HepG2 (cell line): ENCODE measurements at regions of chr7 and their contacts with region 1.

Region 1: DNA sequence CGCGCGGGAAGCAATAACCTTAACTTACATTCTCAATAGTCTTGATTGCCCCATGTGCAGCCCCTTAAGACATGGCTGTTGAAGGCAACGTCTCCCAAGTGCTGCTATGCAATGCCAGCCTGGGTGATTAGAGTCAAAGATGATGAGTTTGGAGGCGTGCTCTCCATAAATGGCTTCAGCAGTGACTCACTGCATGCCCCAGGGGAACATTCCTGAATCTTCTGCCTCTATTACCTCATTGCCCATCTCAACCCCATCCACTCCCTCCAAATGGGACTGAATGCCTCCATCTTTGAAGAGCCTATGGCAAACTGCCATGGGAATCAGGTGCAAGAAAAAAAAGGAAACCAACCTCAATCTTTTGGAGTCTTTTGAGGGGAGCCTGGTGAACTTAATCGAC is 282.8 kb downstream of the SNX10 start:
- DNase-seq: no peak
- ATAC-seq: no peak
- H3K4me3 ChIP-seq: no peak overlapping the region
- H3K27ac ChIP-seq: no peak overlapping the region
- H3K4me1 ChIP-seq: no peaks in the 10 kb centered on the region
- H3K27me3 ChIP-seq: peaks cover 0 to 9% of the 10 kb centered on the region in 2 experiments; a peak in 3 of 5 replicates
- CTCF ChIP-seq: no peak
- EP300 ChIP-seq: no peak
- POLR2A ChIP-seq: no peak
- RAD21 ChIP-seq: no peak

Region 2: GRCh38 chr7:25347360-25348066 is 1227.0 kb before region 1 on chr7:
- CTCF ChIA-PET with region 1: no interaction called
- POLR2A ChIA-PET with region 1: no interaction called
- in situ Hi-C with region 1: no loop called
- intact Hi-C with region 1: loop called (anchors 5 kb)
- DNase-seq: no peak
- ATAC-seq: no peak
- H3K4me3 ChIP-seq: no peak overlapping the region
- H3K27ac ChIP-seq: no peak overlapping the region
- H3K4me1 ChIP-seq: no peaks in the 10 kb centered on the region
- H3K27me3 ChIP-seq: peaks cover 0 to 6% of the 10 kb centered on the region in 2 experiments; a peak in 1 of 5 replicates
- CTCF ChIP-seq: no peak
- EP300 ChIP-seq: no peak
- POLR2A ChIP-seq: no peak
- RAD21 ChIP-seq: no peak

Region 3: DNA sequence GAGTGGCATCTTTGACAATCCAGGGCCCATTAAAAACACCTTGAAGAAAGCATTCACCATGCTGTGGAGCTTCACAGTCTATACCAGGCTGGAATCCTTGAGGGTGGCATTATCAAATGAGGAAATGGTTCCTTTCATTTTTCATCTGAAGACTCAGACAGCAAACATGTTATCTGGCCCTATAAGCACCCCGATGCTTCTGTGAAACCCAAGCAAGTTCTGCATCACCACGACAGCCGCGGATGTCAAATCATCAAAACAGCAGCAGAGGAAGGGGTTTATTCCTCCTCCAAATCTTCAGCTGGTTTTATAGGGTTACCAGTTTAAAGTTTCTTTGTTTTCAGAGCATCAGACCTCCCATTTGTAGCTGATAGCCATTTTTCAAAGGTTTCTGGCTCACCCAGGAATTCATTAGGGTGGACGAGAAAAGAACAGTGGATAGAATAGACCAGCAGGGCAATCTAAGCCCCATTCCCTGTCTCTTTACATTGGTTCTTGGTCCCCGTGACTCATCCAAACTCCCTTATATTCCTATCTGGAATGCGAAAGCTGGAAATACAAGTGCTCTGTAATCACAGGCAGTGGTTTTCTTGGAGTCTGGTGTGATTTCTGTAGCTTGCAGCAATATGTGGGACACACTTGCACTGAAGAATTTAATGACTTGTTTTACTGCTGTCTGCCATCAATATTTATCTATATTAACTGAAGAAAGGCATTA is 72.0 kb after region 1 on chr7:
- CTCF ChIA-PET with region 1: no interaction called
- POLR2A ChIA-PET with region 1: no interaction called
- in situ Hi-C with region 1: no loop called
- intact Hi-C with region 1: no loop called
- DNase-seq: no peak
- ATAC-seq: no peak
- H3K4me3 ChIP-seq: no peak overlapping the region
- H3K27ac ChIP-seq: no peak overlapping the region
- H3K4me1 ChIP-seq: no peaks in the 10 kb centered on the region
- H3K27me3 ChIP-seq: no peaks in the 10 kb centered on the region
- CTCF ChIP-seq: no peak
- EP300 ChIP-seq: no peak
- POLR2A ChIP-seq: no peak
- RAD21 ChIP-seq: no peak